Activated CD4-positive, alpha-beta memory T cell treated with anti-CD3 and anti-CD28 coated beads, Interleukin-2, amount 10 ng/mL, durations not matched to agents 7 days and 5 days (primary cell): ENCODE measurements at regions of chr13 and their contacts with region 1.

Region 1: DNA sequence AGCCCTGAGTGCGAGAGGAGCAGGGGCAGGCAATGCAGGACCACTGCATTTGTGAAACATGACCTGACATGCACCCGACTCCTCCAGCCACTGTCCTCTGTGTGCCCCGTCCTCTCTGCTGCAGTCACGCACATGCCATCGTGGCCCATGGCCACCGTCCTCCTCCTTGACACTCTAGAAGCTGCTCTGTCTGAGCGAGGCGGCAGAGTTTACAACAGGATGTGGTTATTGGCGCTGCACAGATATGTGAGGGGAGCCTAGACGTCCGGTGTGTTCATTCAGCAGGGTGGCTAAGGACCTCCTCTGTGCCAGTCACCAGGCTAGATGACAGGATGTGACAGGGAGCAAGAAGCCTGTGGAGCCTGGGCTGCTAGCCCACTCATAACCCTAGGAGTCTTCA is 277.8 kb downstream of the FOXO1 start:
- DNase-seq: peak; percentile 92
- H3K4me3 Mint-ChIP-seq: peak overlapping the region; percentile 70
- H3K27ac Mint-ChIP-seq: peak overlapping the region; percentile 90
- H3K4me1 Mint-ChIP-seq: peaks cover 40% of the 10 kb centered on the region
- H3K27me3 Mint-ChIP-seq: no peaks in the 10 kb centered on the region

Region 2: DNA sequence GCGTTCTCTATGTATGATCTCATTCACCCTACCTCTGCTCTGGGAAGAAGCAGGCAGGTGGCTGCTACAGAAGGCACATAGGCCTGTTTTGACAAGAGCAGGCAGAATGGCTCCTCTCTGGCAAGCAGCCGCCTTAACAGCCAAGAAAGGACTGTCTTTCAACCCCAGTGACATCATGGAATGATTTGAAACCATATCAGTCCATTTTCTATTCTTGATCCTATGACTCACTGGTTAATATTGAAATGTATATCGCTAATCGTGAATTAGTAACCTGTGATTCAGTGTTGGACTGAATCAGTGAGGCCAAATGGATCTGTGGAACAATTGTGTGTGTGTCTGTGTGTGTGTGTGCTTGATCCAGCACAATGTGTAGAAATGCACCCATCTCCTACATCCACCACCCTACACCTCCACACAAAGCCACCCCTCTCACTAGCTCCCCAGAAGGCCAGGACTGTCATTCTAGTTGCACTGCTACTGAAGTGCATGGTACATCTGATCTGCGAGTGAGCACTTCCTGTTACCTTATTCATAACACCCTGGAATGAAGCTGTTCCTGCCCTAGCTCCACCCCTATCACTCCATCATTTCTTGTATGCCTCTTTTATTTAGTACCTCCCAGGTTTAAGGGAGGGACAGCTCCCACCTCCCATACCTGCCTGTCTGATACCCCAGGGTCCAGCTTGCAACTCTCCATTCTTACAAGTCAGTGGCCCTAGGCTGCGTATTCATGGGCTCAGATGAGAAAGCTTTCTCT is 182.2 kb before region 1 on chr13:
- CTCF ChIA-PET with region 1: no interaction called
- POLR2A ChIA-PET with region 1: interaction called, 10 read pairs
- DNase-seq: peak; percentile 44
- H3K4me3 Mint-ChIP-seq: peak overlapping the region; percentile 31
- H3K27ac Mint-ChIP-seq: peak overlapping the region; percentile 96
- H3K4me1 Mint-ChIP-seq: peaks cover 31% of the 10 kb centered on the region
- H3K27me3 Mint-ChIP-seq: no peaks in the 10 kb centered on the region

Region 3: DNA sequence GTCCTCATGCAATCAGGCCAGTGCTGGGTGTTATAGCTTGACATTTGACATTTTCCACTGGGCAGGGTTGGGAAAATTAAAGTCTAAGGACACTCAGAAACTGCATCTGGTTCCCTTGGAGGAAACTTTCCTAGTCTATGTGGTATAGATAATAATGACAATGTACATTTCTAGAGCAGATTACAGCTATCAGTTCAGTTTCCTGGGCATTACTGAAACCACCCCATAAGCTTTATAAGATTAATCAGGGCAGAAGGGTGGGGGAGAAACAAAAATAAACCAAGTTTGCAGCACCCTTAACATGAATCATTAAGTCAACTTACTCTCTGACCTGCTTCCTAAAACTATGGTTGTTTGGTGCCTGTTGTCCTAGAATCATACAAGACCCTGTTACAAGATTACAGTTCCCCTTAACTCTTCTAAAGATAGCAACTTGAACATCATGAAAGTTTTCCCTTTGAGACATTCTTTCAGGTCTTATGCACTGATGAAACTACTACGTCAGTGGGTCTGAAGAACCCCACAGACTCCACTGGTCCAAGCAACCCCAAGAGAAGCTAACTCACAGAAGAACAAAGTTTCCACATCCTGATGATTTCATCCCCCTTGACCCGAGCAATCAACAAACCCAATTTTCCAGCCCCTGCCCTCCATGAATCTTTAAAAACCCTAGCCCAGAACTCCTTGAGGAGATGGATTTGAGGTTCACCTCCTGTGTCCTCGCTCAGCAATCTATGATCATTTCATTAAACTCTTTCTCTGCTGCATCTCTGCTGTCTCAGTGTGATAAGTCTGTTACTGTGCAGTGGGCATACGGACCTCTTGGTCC is 58.7 kb before region 1 on chr13:
- CTCF ChIA-PET with region 1: no interaction called
- POLR2A ChIA-PET with region 1: no interaction called
- DNase-seq: no peak
- H3K4me3 Mint-ChIP-seq: no peak overlapping the region
- H3K27ac Mint-ChIP-seq: no peak overlapping the region
- H3K4me1 Mint-ChIP-seq: peaks cover 16% of the 10 kb centered on the region
- H3K27me3 Mint-ChIP-seq: no peaks in the 10 kb centered on the region

Region 4: GRCh38 chr13:40375489-40376171 is 13.0 kb before region 1 on chr13:
- CTCF ChIA-PET with region 1: no interaction called
- POLR2A ChIA-PET with region 1: interaction called, 10 read pairs
- DNase-seq: no peak
- H3K4me3 Mint-ChIP-seq: no peak overlapping the region
- H3K27ac Mint-ChIP-seq: no peak overlapping the region
- H3K4me1 Mint-ChIP-seq: peaks cover 30% of the 10 kb centered on the region
- H3K27me3 Mint-ChIP-seq: no peaks in the 10 kb centered on the region

Region 5: GRCh38 chr13:40399803-40400202 is 11.2 kb after region 1 on chr13:
- CTCF ChIA-PET with region 1: no interaction called
- POLR2A ChIA-PET with region 1: no interaction called
- DNase-seq: no peak
- H3K4me3 Mint-ChIP-seq: no peak overlapping the region
- H3K27ac Mint-ChIP-seq: no peak overlapping the region
- H3K4me1 Mint-ChIP-seq: peaks cover 6% of the 10 kb centered on the region
- H3K27me3 Mint-ChIP-seq: no peaks in the 10 kb centered on the region

Region 6: GRCh38 chr13:40433577-40433976 is 45.0 kb after region 1 on chr13:
- CTCF ChIA-PET with region 1: no interaction called
- POLR2A ChIA-PET with region 1: interaction called, 15 read pairs
- DNase-seq: peak; percentile 77
- H3K4me3 Mint-ChIP-seq: no peak overlapping the region
- H3K27ac Mint-ChIP-seq: peak overlapping the region; percentile 28
- H3K4me1 Mint-ChIP-seq: peaks cover 40% of the 10 kb centered on the region
- H3K27me3 Mint-ChIP-seq: no peaks in the 10 kb centered on the region

Region 7: GRCh38 chr13:40485611-40486517 is 97.2 kb after region 1 on chr13:
- CTCF ChIA-PET with region 1: no interaction called
- POLR2A ChIA-PET with region 1: interaction called, 43 read pairs
- DNase-seq: peak; percentile 69
- H3K4me3 Mint-ChIP-seq: peak overlapping the region; percentile 9
- H3K27ac Mint-ChIP-seq: peak overlapping the region; percentile 94
- H3K4me1 Mint-ChIP-seq: peaks cover 59% of the 10 kb centered on the region
- H3K27me3 Mint-ChIP-seq: no peaks in the 10 kb centered on the region